Cardiac septum (tissue), 1 donor: ENCODE measurements at regions of chr10 and their contacts with region 1.

Region 1: GRCh38 chr10:49115015-49115795 is at the start of gene VSTM4:
- DNase-seq: no peak
- total RNA-seq, gene VSTM4: 24.4 TPM

Region 2: GRCh38 chr10:48890888-48891850 is 224.0 kb before region 1 on chr10:
- intact Hi-C with region 1: no loop called
- DNase-seq: no peak

Region 3: GRCh38 chr10:49053053-49053997 is 61.9 kb before region 1 on chr10:
- intact Hi-C with region 1: loop called (anchors 2 kb)
- DNase-seq: no peak

Region 4: GRCh38 chr10:49081547-49082275 is 33.5 kb before region 1 on chr10:
- intact Hi-C with region 1: loop called (anchors 2 kb)
- DNase-seq: no peak

Region 5: DNA sequence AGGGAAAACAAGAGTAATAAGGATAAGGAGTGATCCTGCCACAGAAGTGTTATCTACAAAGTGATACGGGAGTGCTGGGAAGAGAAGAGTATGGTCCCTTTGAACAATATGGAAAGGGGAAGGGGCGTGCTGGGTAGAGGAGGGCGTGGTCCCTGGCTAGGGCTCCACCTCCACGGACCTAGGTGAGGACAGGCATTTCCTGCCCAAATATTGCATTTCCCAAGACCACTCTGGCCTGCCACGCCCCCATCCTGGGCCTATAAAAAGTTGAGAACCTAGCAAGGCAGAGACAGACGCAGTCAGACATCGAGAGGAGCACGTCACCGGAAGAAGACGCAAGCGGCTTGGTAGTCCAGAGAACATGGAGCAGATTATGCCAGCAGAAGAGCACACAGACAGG is 22.7 kb before region 1 on chr10:
- intact Hi-C with region 1: no loop called
- DNase-seq: no peak